ENCODE measurements at regions of chr17 and their contacts with region 1.

Region 1: GRCh38 chr17:76278952-76279741 is 14.0 kb downstream of the UBALD2 start:
- DNase-seq: peak; percentile 78 to 84 (median 79)
- H3K4me3 ChIP-seq: no peak overlapping the region
- H3K4me3 Mint-ChIP-seq: no peak overlapping the region
- H3K27ac ChIP-seq: no peak overlapping the region
- H3K27ac Mint-ChIP-seq: peak overlapping the region in 3 of 7 donors; percentile 25 to 77 (median 59)
- H3K4me1 ChIP-seq: peaks cover 17% of the 10 kb centered on the region
- H3K4me1 Mint-ChIP-seq: peaks cover 7 to 28% (median 10%) of the 10 kb centered on the region in 4 donors
- H3K27me3 ChIP-seq: no peaks in the 10 kb centered on the region
- H3K27me3 Mint-ChIP-seq: no peaks in the 10 kb centered on the region

Region 2: GRCh38 chr17:75625813-75626486 is 653.2 kb before region 1 on chr17:
- CTCF ChIA-PET with region 1: no interaction called
- POLR2A ChIA-PET with region 1: no interaction called
- intact Hi-C with region 1: no loop called
- DNase-seq: no peak
- H3K4me3 ChIP-seq: no peak overlapping the region
- H3K4me3 Mint-ChIP-seq: no peak overlapping the region
- H3K27ac ChIP-seq: no peak overlapping the region
- H3K27ac Mint-ChIP-seq: no peak overlapping the region
- H3K4me1 ChIP-seq: no peaks in the 10 kb centered on the region
- H3K4me1 Mint-ChIP-seq: no peaks in the 10 kb centered on the region
- H3K27me3 ChIP-seq: no peaks in the 10 kb centered on the region
- H3K27me3 Mint-ChIP-seq: no peaks in the 10 kb centered on the region

Region 3: GRCh38 chr17:76063875-76064546 is 215.1 kb before region 1 on chr17:
- CTCF ChIA-PET with region 1: interaction called, 25 read pairs
- POLR2A ChIA-PET with region 1: interaction called, 3 read pairs
- intact Hi-C with region 1: no loop called
- DNase-seq: peak; percentile 50 to 78 (median 61)
- H3K4me3 ChIP-seq: no peak overlapping the region
- H3K4me3 Mint-ChIP-seq: peak overlapping the region; percentile 69 to 92 (median 74)
- H3K27ac ChIP-seq: peak overlapping the region; percentile 47
- H3K27ac Mint-ChIP-seq: peak overlapping the region; percentile 92 to 98 (median 97)
- H3K4me1 ChIP-seq: peaks cover 16% of the 10 kb centered on the region
- H3K4me1 Mint-ChIP-seq: peaks cover 18 to 34% (median 22%) of the 10 kb centered on the region in 4 donors
- H3K27me3 ChIP-seq: no peaks in the 10 kb centered on the region
- H3K27me3 Mint-ChIP-seq: no peaks in the 10 kb centered on the region

Region 4: DNA sequence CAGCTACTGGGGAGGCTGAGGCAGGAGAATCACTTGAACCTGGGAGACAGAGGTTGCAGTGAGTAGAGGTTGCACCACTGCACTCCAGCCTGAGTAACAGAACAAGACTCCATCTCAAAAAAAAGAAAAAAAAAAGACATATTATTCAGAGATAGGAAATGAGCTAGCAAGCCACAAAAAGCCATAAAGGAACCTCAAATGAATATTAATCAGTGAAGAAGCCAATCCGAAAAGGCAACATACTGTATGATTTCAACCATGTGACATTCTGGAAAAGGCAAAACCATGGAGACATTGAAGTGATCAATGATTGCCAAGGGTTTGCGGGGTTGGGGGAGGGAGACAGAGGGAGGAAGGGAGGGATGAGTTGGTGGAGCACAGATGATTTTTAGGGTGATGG is 167.2 kb before region 1 on chr17:
- CTCF ChIA-PET with region 1: interaction called, 23 read pairs
- POLR2A ChIA-PET with region 1: interaction called, 7 read pairs
- intact Hi-C with region 1: no loop called
- DNase-seq: no peak
- H3K4me3 ChIP-seq: no peak overlapping the region
- H3K4me3 Mint-ChIP-seq: no peak overlapping the region
- H3K27ac ChIP-seq: no peak overlapping the region
- H3K27ac Mint-ChIP-seq: no peak overlapping the region
- H3K4me1 ChIP-seq: no peaks in the 10 kb centered on the region
- H3K4me1 Mint-ChIP-seq: no peaks in the 10 kb centered on the region
- H3K27me3 ChIP-seq: no peaks in the 10 kb centered on the region
- H3K27me3 Mint-ChIP-seq: no peaks in the 10 kb centered on the region

Region 5: GRCh38 chr17:76141212-76142038 is 137.7 kb before region 1 on chr17 and contains the start of gene FOXJ1:
- CTCF ChIA-PET with region 1: interaction called, 40 read pairs
- POLR2A ChIA-PET with region 1: interaction called, 149 read pairs
- intact Hi-C with region 1: loop called (anchors 1 kb)
- DNase-seq: peak; percentile 90 to 93 (median 92)
- H3K4me3 ChIP-seq: peak within 1 kb of the TSS; percentile 19 to 48
- H3K4me3 Mint-ChIP-seq: peak within 1 kb of the TSS; percentile 75 to 94 (median 84)
- H3K27ac ChIP-seq: no peak within 1 kb of the TSS
- H3K27ac Mint-ChIP-seq: peak within 1 kb of the TSS; percentile 78 to 96 (median 85)
- H3K4me1 ChIP-seq: peaks cover 66% of the 10 kb centered on the region
- H3K4me1 Mint-ChIP-seq: peaks cover 39 to 63% (median 50%) of the 10 kb centered on the region in 4 donors
- H3K27me3 ChIP-seq: peaks cover 4% of the 10 kb centered on the region
- H3K27me3 Mint-ChIP-seq: peaks cover 3% of the 10 kb centered on the region in 2 donors
- total RNA-seq, gene FOXJ1: 0.19 to 0.20 TPM

Region 6: GRCh38 chr17:76182016-76182764 is 97.0 kb before region 1 on chr17:
- CTCF ChIA-PET with region 1: interaction called, 168 read pairs
- POLR2A ChIA-PET with region 1: interaction called, 603 read pairs
- intact Hi-C with region 1: loop called (anchors 1 kb)
- DNase-seq: peak; percentile 88 to 94 (median 89)
- H3K4me3 ChIP-seq: no peak overlapping the region
- H3K4me3 Mint-ChIP-seq: peak overlapping the region in 6 of 8 donors; percentile 57 to 78 (median 63)
- H3K27ac ChIP-seq: no peak overlapping the region
- H3K27ac Mint-ChIP-seq: peak overlapping the region; percentile 92 to 98 (median 96)
- H3K4me1 ChIP-seq: peaks cover 72% of the 10 kb centered on the region
- H3K4me1 Mint-ChIP-seq: peaks cover 31 to 72% (median 55%) of the 10 kb centered on the region in 4 donors
- H3K27me3 ChIP-seq: no peaks in the 10 kb centered on the region
- H3K27me3 Mint-ChIP-seq: no peaks in the 10 kb centered on the region

Region 7: GRCh38 chr17:76246080-76247066 is 32.8 kb before region 1 on chr17:
- CTCF ChIA-PET with region 1: interaction called, 13 read pairs
- POLR2A ChIA-PET with region 1: interaction called, 620 read pairs
- intact Hi-C with region 1: no loop called
- DNase-seq: peak; percentile 47 to 61 (median 58)
- H3K4me3 ChIP-seq: peak overlapping the region in 1 of 2 donors; percentile 11
- H3K4me3 Mint-ChIP-seq: peak overlapping the region in 7 of 8 donors; percentile 59 to 85 (median 83)
- H3K27ac ChIP-seq: peak overlapping the region; percentile 25
- H3K27ac Mint-ChIP-seq: peak overlapping the region; percentile 71 to 94 (median 91)
- H3K4me1 ChIP-seq: peaks cover 67% of the 10 kb centered on the region
- H3K4me1 Mint-ChIP-seq: peaks cover 18 to 81% (median 50%) of the 10 kb centered on the region in 4 donors
- H3K27me3 ChIP-seq: no peaks in the 10 kb centered on the region
- H3K27me3 Mint-ChIP-seq: no peaks in the 10 kb centered on the region

Region 8: GRCh38 chr17:76370261-76370993 is 91.3 kb after region 1 on chr17:
- CTCF ChIA-PET with region 1: no interaction called
- POLR2A ChIA-PET with region 1: no interaction called
- intact Hi-C with region 1: no loop called
- DNase-seq: no peak
- H3K4me3 ChIP-seq: no peak overlapping the region
- H3K4me3 Mint-ChIP-seq: no peak overlapping the region
- H3K27ac ChIP-seq: no peak overlapping the region
- H3K27ac Mint-ChIP-seq: peak overlapping the region in 1 of 7 donors; percentile 50
- H3K4me1 ChIP-seq: no peaks in the 10 kb centered on the region
- H3K4me1 Mint-ChIP-seq: no peaks in the 10 kb centered on the region
- H3K27me3 ChIP-seq: no peaks in the 10 kb centered on the region
- H3K27me3 Mint-ChIP-seq: peaks cover 0 to 1% of the 10 kb centered on the region in 2 donors

Measured in CD4-positive, alpha-beta memory T cell (primary cell).